Head of caudate nucleus (tissue), 42 donors: ENCODE measurements at regions of chr1 and their contacts with region 1.

Region 1: DNA sequence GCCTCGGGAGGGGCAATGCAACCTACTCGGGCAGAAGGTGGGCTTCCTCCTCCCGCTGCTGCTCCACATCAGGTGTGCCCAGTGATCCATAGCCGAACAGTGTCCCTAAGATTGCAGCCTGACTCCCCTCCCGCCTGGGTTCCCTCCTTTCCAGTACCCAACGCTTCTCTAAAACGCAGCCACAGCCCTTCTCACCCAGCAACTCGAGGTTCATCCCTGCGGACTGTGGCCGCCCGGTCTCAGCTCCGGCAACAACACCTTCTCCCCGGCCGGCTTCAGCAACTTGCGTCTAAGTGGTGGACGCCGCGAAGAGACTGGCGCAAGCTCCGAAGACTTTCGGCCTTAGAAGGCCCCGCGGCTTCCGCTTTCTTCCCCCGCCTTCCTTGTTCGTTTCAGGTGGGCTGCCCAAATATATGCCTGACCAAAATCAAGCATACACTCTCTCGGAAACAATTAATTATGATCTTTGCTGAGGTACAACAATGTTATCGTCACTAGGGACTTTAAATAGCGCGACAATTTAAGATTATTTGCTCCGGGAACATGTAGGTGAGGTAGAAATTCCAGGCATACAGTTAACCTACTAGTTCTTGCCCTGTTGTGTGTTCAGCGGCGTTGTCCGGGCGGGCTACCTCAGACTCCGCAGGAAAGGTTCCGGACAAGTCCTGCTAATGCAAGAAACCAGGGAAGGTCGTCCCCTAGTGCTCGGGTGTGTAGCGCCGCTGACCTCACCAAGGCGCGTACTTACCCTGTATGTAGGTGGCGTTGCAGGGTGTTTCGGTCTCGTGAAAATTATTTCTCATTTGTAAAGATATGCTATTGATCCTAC is at the start of gene RBBP5:
- DNase-seq: peak; percentile 91 to 99 (median 96)

Region 2: DNA sequence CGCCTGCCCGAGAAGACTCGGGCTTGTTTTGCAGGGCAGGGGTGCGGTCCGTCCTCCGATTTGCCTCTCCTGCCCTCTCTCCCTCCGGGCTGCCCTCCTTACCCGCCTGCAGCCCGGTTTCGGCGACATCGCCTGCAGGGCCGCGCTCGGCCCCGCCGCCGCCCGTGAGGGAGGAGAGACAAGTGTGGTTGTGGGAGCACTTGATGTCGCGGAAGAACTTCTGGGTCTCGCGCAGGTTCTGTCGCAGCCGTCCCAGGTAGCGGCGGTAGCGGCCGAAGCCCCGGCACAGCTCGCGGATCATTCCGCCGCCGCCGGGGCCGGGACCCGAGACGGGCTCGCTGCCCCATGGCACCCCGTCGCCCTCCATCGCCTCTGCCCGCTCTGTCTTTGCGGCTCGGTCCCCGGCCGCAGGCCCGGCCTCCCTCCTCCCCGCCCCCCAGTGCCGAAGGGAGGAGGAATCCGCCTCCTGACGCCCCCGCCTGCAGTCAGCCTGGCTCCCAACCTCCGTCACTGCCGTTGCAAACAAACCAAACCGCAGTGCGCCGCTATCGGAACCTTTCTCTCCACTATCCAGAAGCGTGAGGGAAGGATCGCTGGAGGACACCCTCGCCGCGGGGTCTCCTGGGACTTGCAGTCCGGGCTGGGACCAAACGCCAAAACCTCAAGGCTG is 89.4 kb after region 1 on chr1 and contains the start of gene DSTYK:
- intact Hi-C with region 1: loop called (anchors 5 kb)
- DNase-seq: peak; percentile 89 to 99 (median 96)